Cardiac septum (tissue), 1 donor: ENCODE measurements at regions of chr6 and their contacts with region 1.

Region 1: DNA sequence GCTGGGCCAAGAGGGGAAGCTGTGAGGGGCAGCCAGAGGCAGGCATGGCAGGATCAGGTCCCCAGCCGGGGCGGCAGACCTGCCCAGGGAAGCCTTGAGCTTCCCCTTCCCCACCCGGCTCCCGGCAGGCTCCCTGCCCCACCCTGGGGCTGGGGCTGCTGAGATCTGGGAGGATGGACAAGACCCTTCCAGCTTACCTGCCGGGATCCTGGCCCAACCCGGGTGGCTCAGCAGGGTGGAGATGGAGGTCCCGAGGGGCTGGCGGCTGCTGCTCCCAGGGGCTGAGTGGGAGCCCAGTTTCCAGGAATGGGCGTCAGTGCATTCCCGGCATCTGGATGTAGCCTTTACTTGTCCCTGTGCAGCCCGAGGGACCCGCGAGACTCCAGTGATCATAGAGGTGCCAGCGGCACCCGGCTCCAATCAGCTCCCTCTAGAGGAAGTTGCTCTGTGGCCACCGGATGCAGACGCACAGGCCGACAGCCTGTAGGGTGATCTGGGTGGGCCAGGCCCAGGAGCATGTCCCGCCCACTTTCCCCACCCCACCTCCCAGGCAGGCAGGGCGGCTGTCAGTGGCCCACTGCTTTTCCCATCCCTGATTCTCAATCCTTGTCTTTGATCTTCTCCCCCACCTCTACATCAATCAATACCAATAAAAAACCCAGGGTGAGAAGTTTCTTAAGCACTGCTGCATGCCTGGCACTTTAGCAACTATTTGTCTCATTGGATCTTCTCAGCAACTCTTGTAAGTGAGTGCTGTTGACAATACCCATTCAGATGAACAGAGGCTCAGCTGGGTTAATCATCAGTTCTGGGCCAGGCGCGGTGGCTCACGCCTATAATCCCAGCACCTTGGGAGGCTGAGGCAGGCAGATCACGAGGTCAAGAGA is at the start of gene BAK1:
- DNase-seq: peak; percentile 95
- total RNA-seq, gene BAK1: 18.8 TPM

Region 2: GRCh38 chr6:33443619-33444504 is 136.2 kb before region 1 on chr6:
- intact Hi-C with region 1: no loop called
- DNase-seq: no peak

Region 3: DNA sequence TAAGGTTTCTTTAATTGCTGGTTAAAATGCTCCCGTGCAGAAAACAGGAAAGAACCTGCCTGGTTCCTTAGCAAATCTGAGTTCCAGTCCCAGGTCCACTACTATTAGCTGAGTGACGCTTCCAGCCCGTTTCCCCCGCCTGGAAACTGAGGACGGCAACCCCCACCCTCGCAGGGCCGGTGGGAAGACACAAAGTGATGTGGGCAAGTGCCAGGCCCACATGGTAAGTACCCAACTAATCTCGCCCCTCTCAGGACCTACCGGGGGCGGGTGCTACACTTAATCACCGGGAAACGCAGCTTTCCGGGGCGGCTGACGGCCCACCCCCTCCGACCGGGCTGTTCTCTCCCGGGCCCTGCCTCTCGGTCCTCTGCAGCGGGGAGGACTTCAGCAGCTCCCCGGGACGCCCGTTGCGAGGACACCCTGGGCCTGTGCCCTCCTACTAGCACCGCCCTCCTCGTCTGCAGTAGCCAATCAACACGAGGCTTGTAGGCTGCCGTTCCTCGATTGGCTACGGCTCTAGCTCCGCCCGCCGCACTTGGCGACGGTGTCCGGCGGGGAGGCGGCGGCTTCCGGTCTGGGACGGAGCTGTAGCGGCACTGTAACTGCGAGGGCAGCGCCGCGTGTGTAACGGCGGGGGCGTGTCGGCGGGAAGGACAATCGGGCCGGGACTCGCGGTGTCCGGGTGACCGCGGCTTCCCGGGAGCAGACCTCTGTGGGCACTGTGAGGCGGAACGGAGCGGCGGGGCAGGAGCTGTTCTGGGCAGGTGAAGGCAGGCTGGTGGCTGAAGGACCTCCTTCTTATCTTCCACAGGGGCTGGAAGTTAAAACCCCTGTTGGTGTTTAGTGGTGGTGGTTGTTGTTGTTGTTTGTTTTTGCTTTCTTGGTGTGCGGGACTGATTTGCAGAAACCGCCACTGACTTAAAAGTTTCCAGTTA is 125.8 kb before region 1 on chr6 and contains the start of gene ZBTB9:
- intact Hi-C with region 1: loop called (anchors 10 kb)
- DNase-seq: peak; percentile 99
- total RNA-seq, gene ZBTB9: 4.5 TPM

Region 4: DNA sequence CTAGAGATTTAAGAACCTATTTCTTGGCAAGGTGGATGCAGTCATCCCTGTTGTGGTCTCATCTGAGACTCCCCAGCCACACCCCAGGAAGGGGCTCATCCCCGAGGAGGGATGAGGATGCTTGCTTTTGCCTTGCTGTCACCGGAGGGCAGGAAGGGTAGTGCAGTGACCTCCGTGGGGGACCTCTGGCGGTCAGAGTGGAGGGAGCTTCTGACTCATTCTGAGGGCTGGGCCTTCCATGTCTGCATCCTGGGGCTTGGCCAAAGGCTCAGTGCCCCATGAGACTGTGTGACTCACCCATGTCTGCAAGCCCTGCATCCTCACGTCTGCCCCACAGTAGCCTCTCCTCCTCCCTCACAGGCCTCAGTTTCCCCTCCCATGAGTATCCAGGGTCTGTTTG is 92.7 kb after region 1 on chr6:
- intact Hi-C with region 1: no loop called
- DNase-seq: peak; percentile 93